SK-N-SH (cell line): ENCODE measurements at regions of chr12 and their contacts with region 1.

Region 1: DNA sequence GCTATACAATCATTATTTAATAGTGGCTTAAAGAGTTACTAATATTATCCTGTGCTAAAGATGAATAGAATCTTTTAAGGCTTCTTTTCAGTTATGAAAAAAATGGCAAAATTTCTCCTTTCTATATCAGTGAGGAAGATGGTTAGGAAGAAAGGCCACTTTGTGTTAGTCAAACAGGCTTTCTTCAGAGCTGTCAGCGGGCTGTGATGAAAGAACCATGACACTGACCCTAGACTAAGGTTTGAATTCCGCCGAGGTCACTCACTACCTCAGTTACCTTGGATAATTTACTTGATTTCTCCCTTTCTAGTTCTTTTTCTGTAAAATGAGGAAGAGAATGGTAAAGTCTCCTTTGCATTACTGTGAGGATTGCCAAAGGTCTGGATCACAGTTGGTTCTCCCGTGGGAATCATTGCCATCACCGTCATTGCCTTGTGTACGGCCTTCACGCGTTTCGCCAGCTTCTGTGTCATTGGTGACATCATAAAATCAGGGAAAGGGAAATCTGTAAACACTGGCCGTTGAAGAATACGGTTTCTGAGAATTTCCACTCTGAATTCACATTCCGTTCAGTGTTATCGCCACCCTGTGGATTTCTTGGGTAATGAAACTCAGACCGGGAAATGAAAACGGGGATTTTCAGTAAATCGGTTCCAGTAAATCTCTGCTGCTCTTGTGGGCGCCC is 26.7 kb upstream of the YBX3 start:
- DNase-seq: peak; percentile 63
- H3K4me3 ChIP-seq: peak overlapping the region; percentile 40 to 56
- H3K27ac ChIP-seq: no peak overlapping the region
- H3K4me1 ChIP-seq: peaks cover 0 to 4% of the 10 kb centered on the region in 2 experiments; a peak in 1 of 4 replicates
- H3K27me3 ChIP-seq: no peaks in the 10 kb centered on the region; the same call in 1 of the 2 replicates
- CTCF ChIP-seq: peak; percentile 96
- EP300 ChIP-seq: no peak
- RAD21 ChIP-seq: peak; percentile 79

Region 2: GRCh38 chr12:10235761-10236631 is 513.8 kb before region 1 on chr12:
- CTCF ChIA-PET with region 1: interaction called, 14 read pairs
- POLR2A ChIA-PET with region 1: no interaction called
- DNase-seq: peak; percentile 58
- H3K4me3 ChIP-seq: no peak overlapping the region
- H3K27ac ChIP-seq: no peak overlapping the region
- H3K4me1 ChIP-seq: peaks cover 0 to under 1% of the 10 kb centered on the region in 2 experiments; a peak in 1 of 4 replicates
- H3K27me3 ChIP-seq: no peaks in the 10 kb centered on the region; the same call in 1 of the 2 replicates
- CTCF ChIP-seq: peak; percentile 88
- EP300 ChIP-seq: no peak
- RAD21 ChIP-seq: peak; percentile 88

Region 3: GRCh38 chr12:10732549-10732948 is 17.3 kb before region 1 on chr12:
- CTCF ChIA-PET with region 1: interaction called, 20 read pairs
- POLR2A ChIA-PET with region 1: no interaction called
- DNase-seq: no peak
- H3K4me3 ChIP-seq: no peak overlapping the region
- H3K27ac ChIP-seq: no peak overlapping the region
- H3K4me1 ChIP-seq: no peaks in the 10 kb centered on the region
- H3K27me3 ChIP-seq: peaks cover 57% of the 10 kb centered on the region
- CTCF ChIP-seq: no peak
- EP300 ChIP-seq: no peak
- RAD21 ChIP-seq: no peak

Region 4: GRCh38 chr12:10771132-10771733 is 21.4 kb after region 1 on chr12:
- CTCF ChIA-PET with region 1: interaction called, 30 read pairs
- POLR2A ChIA-PET with region 1: no interaction called
- DNase-seq: peak; percentile 22
- H3K4me3 ChIP-seq: no peak overlapping the region
- H3K27ac ChIP-seq: no peak overlapping the region
- H3K4me1 ChIP-seq: no peaks in the 10 kb centered on the region
- H3K27me3 ChIP-seq: peaks cover 25% of the 10 kb centered on the region; the same call in 1 of the 2 replicates
- CTCF ChIP-seq: peak; percentile 78
- EP300 ChIP-seq: no peak
- RAD21 ChIP-seq: peak; percentile 87